Gastrocnemius medialis (tissue), 4 donors: ENCODE measurements at regions of chr14 and their contacts with region 1.

Region 1: GRCh38 chr14:59964251-59965007 is 44.5 kb downstream of the LRRC9 start:
- DNase-seq: no peak
- ATAC-seq: peak; percentile 13 to 43
- H3K4me3 ChIP-seq: peak overlapping the region in 1 of 4 donors; percentile 81
- H3K27ac ChIP-seq: peak overlapping the region in 1 of 4 donors; percentile 73
- H3K4me1 ChIP-seq: peaks cover 0 to 3% of the 10 kb centered on the region in 2 donors
- H3K27me3 ChIP-seq: no peaks in the 10 kb centered on the region
- CTCF ChIP-seq: no peak
- POLR2A ChIP-seq: no peak

Region 2: GRCh38 chr14:60002819-60003492 is 38.5 kb after region 1 on chr14:
- in situ Hi-C with region 1: no loop called
- intact Hi-C with region 1: loop called (anchors 5 kb)
- DNase-seq: peak; percentile 76 to 92
- ATAC-seq: peak; percentile 96 to 98
- H3K4me3 ChIP-seq: no peak overlapping the region
- H3K27ac ChIP-seq: peak overlapping the region; percentile 64 to 81 (median 69)
- H3K4me1 ChIP-seq: peaks cover 30% of the 10 kb centered on the region in 2 donors
- H3K27me3 ChIP-seq: no peaks in the 10 kb centered on the region
- CTCF ChIP-seq: no peak
- POLR2A ChIP-seq: no peak

Region 3: DNA sequence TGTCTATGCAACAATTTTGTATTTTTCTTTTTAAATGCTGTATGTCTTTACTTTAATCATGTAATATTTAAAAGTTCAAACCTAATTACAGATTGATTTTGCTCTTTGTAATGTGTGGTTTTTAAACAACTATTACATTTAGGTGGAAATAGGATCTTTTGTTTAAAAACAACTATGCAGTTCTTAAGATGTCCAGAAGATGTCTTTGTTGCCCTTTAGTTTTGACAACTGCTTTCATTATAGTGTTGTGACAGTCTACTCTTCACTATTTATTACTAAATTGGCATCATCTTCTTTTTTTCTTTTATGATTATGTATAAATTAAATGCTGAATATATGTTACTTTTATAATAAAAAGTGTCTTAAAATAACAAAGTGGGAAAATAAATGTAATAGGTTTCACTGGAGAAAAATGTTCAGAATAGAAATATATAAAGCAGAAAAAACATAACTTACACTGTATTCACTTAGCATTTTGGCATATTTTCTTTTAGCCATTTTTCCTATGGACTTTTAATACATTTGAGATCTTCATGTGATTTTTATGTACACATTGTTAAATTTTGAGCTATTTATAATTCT is 100.2 kb after region 1 on chr14:
- in situ Hi-C with region 1: loop called (anchors 25 kb)
- intact Hi-C with region 1: loop called (anchors 1 kb)
- DNase-seq: no peak
- ATAC-seq: peak; percentile 56 to 75
- H3K4me3 ChIP-seq: no peak overlapping the region
- H3K27ac ChIP-seq: no peak overlapping the region
- H3K4me1 ChIP-seq: peaks cover 0 to 4% of the 10 kb centered on the region in 2 donors
- H3K27me3 ChIP-seq: no peaks in the 10 kb centered on the region
- CTCF ChIP-seq: peak; percentile 45 to 90 (median 66)
- POLR2A ChIP-seq: no peak